T-cell (primary cell): ENCODE measurements at regions of chr1 and their contacts with region 1.

Region 1: DNA sequence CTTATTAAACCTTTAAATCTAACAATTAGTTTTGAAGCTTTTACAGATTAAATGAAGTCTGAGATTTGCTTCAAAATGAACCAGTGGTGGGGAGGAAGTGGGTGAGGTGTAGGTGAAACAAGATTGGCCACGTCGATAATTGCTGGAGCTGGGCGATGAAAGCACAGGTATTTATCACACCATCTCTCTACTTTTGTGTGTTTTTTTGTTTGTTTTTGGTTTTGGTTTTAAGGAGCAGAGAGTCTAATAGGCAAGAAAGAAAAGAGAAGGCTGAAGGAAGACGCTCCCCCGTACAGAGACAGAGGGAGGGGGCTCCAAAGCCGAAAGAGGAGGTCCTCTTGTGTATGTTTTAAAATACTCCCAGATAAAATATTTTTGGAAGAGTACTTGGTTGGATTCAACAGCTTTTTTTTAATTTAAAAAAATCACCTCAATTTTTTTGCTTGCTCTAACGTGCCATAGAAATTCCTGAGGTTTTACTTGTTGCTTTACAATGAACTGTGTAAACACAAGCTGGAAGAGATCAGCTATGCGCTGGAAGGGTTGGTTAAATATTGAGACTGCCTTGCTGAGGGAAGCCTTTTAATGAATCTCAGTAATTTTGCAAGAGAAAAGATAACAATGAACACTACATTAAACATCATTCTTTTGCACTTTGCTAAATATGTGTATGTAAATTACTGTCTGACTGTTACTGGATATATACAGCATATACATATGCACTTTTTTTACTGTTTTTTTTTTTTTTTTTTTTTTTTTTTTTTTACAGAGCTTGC is 6.7 kb upstream of the LGALS8 start:
- DNase-seq: peak in 33 of 35 experiments; percentile 10 to 65 (median 30)
- ATAC-seq: peak; percentile 90 to 94 (median 92)
- H3K4me3 ChIP-seq: peak overlapping the region in 1 of 2 donors; percentile 12
- H3K4me3 Mint-ChIP-seq: peak overlapping the region; percentile 72 to 75 (median 73)
- H3K27ac ChIP-seq: peak overlapping the region; percentile 59
- H3K27ac Mint-ChIP-seq: peak overlapping the region; percentile 93 to 96
- H3K4me1 ChIP-seq: peaks cover 10 to 13% of the 10 kb centered on the region in 2 experiments
- H3K4me1 Mint-ChIP-seq: peaks cover 19 to 39% (median 33%) of the 10 kb centered on the region in 3 donors
- H3K27me3 ChIP-seq: no peaks in the 10 kb centered on the region
- H3K27me3 Mint-ChIP-seq: no peaks in the 10 kb centered on the region

Region 2: DNA sequence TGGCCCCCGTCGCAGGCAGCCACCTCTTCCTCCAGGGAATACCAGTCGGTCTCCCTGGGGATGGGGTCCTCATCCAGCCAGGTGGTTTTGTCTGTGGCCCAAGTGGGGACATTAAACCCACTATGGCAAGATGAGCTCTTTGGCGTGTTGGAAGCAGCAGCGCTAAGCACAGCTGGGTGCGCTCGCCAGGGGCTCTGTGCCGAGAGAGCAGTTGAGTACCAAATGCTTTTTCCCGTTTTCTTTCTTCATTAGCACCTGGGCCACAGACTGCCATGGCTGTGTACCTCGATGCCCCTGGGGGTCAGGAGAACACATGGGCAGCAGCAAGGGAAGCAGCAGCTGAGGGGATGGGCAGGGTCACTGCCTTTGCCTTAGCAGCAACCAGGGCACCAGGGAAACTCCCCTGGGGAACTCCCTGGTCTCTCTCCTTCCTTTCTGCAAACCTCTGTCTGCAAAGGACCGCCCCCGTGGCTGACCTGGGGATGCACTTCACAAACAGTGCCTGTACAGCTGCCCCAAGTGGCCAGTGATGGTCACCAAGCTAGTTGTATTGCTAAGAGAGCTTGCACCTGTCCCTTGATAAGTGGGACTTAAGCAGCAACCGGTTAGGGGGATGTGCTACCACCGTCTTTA is 92.0 kb before region 1 on chr1:
- CTCF ChIA-PET with region 1: no interaction called
- POLR2A ChIA-PET with region 1: no interaction called
- DNase-seq: peak in 10 of 35 experiments; percentile 3 to 46 (median 11)
- ATAC-seq: peak in 1 of 4 experiments; percentile 38
- H3K4me3 ChIP-seq: no peak overlapping the region
- H3K4me3 Mint-ChIP-seq: no peak overlapping the region
- H3K27ac ChIP-seq: no peak overlapping the region
- H3K27ac Mint-ChIP-seq: no peak overlapping the region
- H3K4me1 ChIP-seq: peaks cover 0 to 7% of the 10 kb centered on the region in 2 experiments
- H3K4me1 Mint-ChIP-seq: peaks cover 0 to 16% (median 0%) of the 10 kb centered on the region in 3 donors
- H3K27me3 ChIP-seq: no peaks in the 10 kb centered on the region
- H3K27me3 Mint-ChIP-seq: peaks cover 0 to 3% of the 10 kb centered on the region in 2 donors

Region 3: GRCh38 chr1:236451796-236452373 is 65.2 kb before region 1 on chr1:
- CTCF ChIA-PET with region 1: no interaction called
- POLR2A ChIA-PET with region 1: no interaction called
- DNase-seq: peak in 28 of 35 experiments; percentile 2 to 63 (median 22)
- ATAC-seq: peak in 3 of 4 experiments; percentile 45 to 61 (median 55)
- H3K4me3 ChIP-seq: no peak overlapping the region
- H3K4me3 Mint-ChIP-seq: no peak overlapping the region
- H3K27ac ChIP-seq: no peak overlapping the region
- H3K27ac Mint-ChIP-seq: no peak overlapping the region
- H3K4me1 ChIP-seq: peaks cover 0 to 4% of the 10 kb centered on the region in 2 experiments
- H3K4me1 Mint-ChIP-seq: peaks cover 0 to 10% (median 0%) of the 10 kb centered on the region in 3 donors
- H3K27me3 ChIP-seq: peaks cover 0 to 5% of the 10 kb centered on the region in 2 experiments
- H3K27me3 Mint-ChIP-seq: no peaks in the 10 kb centered on the region

Region 4: DNA sequence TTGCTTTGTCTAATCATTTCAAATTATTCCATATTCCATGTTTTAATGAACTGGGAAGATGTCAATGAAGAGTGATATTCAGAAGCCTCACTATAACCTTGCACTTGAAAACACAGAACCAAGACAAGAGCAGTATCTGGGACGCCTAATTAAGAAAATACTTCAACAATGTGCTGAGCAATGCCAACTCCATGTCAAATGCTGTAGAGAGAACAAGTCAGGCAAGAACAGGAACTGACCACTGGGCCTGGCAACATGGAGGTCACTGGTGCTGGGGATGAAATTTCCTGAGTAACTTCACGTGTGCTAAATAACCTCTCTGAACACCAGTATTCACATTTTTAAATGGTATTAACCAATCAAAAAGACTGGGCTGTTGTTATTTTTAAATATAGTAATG is 64.4 kb after region 1 on chr1:
- CTCF ChIA-PET with region 1: interaction called in 1 of 2 experiments, 12 read pairs
- POLR2A ChIA-PET with region 1: no interaction called
- DNase-seq: no peak
- ATAC-seq: no peak
- H3K4me3 ChIP-seq: no peak overlapping the region
- H3K4me3 Mint-ChIP-seq: no peak overlapping the region
- H3K27ac ChIP-seq: no peak overlapping the region
- H3K27ac Mint-ChIP-seq: no peak overlapping the region
- H3K4me1 ChIP-seq: no peaks in the 10 kb centered on the region
- H3K4me1 Mint-ChIP-seq: no peaks in the 10 kb centered on the region
- H3K27me3 ChIP-seq: no peaks in the 10 kb centered on the region
- H3K27me3 Mint-ChIP-seq: no peaks in the 10 kb centered on the region